ENCODE measurements at regions of chr15 and their contacts with region 1.

Region 1: GRCh38 chr15:58401991-58402649 is 29.7 kb upstream of the LIPC start:
- DNase-seq: no peak
- CTCF ChIP-seq: no peak

Region 2: GRCh38 chr15:58469432-58470353 is 67.6 kb after region 1 on chr15:
- in situ Hi-C with region 1: loop called (anchors 10 kb)
- DNase-seq: no peak
- CTCF ChIP-seq: no peak

Region 3: GRCh38 chr15:58608129-58608590 is 206.0 kb after region 1 on chr15:
- in situ Hi-C with region 1: no loop called
- DNase-seq: no peak
- CTCF ChIP-seq: no peak

Measured in GM13976 (cell line).